Naive thymus-derived CD8-positive, alpha-beta T cell (primary cell): ENCODE measurements at regions of chr20 and their contacts with region 1.

Region 1: GRCh38 chr20:3854462-3854871 is 7.8 kb downstream of the MAVS start:
- DNase-seq: no peak
- ATAC-seq: no peak
- H3K4me3 Mint-ChIP-seq: no peak overlapping the region
- H3K27ac Mint-ChIP-seq: peak overlapping the region in 5 of 10 donors; percentile 22 to 83 (median 41)
- H3K4me1 Mint-ChIP-seq: peaks cover 7 to 27% (median 19%) of the 10 kb centered on the region in 4 donors
- H3K27me3 Mint-ChIP-seq: no peaks in the 10 kb centered on the region

Region 2: DNA sequence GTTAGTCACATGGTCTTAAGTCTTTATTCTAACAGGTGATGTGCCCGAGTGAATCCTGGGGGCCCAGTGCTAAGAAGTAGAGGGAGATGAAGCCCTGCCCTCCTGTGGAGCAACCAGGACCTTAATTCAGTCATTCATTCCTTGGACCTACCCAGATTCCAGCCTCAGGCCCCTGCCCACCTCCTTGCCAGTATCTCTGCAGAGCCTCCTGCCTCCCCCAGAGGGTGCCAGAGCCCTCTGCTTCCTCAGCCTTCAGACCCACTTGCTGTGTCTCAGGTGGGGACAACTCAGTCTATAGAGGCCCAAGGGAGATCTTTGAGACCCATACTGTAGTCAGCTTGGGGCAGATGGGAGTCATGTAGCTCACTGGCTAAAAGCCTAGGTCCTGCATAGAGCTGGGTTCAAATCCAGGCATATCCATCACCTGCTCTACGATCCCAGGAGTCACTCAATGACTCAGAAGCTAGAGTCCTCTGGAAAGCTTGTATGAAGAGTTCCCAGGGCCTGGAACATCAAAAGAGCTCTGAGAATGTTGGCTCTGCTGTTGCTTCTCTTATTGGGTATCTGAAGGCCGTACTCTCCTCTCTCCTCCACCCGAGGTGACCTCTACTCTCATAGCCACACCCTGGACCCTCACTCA is 138.2 kb before region 1 on chr20:
- POLR2A ChIA-PET with region 1: no interaction called
- DNase-seq: peak in 6 of 10 donors; percentile 8 to 35 (median 15)
- ATAC-seq: peak; percentile 59 to 72
- H3K4me3 Mint-ChIP-seq: no peak overlapping the region
- H3K27ac Mint-ChIP-seq: no peak overlapping the region
- H3K4me1 Mint-ChIP-seq: peaks cover 0 to 5% (median 0%) of the 10 kb centered on the region in 4 donors
- H3K27me3 Mint-ChIP-seq: peaks cover 9 to 31% (median 22%) of the 10 kb centered on the region in 5 donors

Region 3: GRCh38 chr20:3786665-3787323 is 67.7 kb before region 1 on chr20 and contains the start of gene CENPB:
- POLR2A ChIA-PET with region 1: interaction called, 19 read pairs
- DNase-seq: peak; percentile 79 to 94 (median 89)
- ATAC-seq: peak; percentile 85 to 88
- H3K4me3 Mint-ChIP-seq: peak within 1 kb of the TSS; percentile 68 to 89 (median 82)
- H3K27ac Mint-ChIP-seq: peak within 1 kb of the TSS in 8 of 10 donors; percentile 73 to 90 (median 85)
- H3K4me1 Mint-ChIP-seq: peaks cover 17 to 45% (median 38%) of the 10 kb centered on the region in 4 donors
- H3K27me3 Mint-ChIP-seq: no peaks in the 10 kb centered on the region
- polyA plus RNA-seq, gene CENPB: 1.0 to 1.7 (median 1.4) TPM

Region 4: GRCh38 chr20:3820048-3820900 is 34.2 kb before region 1 on chr20 and contains the start of gene AP5S1:
- POLR2A ChIA-PET with region 1: interaction called, 10 read pairs
- DNase-seq: peak; percentile 81 to 99 (median 88)
- ATAC-seq: peak; percentile 84
- H3K4me3 Mint-ChIP-seq: peak within 1 kb of the TSS; percentile 82 to 95 (median 90)
- H3K27ac Mint-ChIP-seq: peak within 1 kb of the TSS; percentile 91 to 99 (median 98)
- H3K4me1 Mint-ChIP-seq: peaks cover 20 to 55% (median 55%) of the 10 kb centered on the region in 4 donors
- H3K27me3 Mint-ChIP-seq: no peaks in the 10 kb centered on the region
- polyA plus RNA-seq, gene AP5S1: 10.1 to 21.8 (median 19.3) TPM

Region 5: DNA sequence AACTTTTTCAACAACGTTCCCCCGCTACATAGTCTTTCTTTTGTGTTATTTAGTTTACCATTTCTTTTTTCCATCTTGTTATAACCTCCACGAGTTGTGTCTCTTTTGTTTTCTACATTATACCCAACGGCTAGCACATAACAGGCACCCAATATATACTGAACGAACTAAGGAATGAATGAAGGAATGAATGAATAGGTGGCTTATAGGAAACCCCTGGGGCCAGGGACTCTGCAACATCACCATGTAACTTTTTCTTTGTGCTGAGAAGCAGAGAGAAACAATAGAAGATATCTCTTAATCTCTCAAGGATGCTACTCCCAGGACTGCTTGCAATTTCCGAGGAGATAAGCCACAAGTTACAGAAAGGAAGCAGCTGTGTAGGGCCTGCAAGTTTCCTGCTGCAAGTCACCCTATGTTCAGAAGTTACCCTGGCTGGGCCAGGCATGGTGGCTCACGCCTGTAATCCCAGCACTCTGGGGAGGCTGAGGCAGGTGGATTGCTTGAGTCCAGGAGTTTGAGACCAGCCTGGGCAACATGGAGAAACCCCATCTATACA is 15.2 kb before region 1 on chr20:
- POLR2A ChIA-PET with region 1: interaction called, 10 read pairs
- DNase-seq: no peak
- ATAC-seq: no peak
- H3K4me3 Mint-ChIP-seq: no peak overlapping the region
- H3K27ac Mint-ChIP-seq: peak overlapping the region in 1 of 10 donors; percentile 79
- H3K4me1 Mint-ChIP-seq: peaks cover 0 to 3% (median under 1%) of the 10 kb centered on the region in 4 donors
- H3K27me3 Mint-ChIP-seq: no peaks in the 10 kb centered on the region